ENCODE measurements at regions of chr14 and their contacts with region 1.

Region 1: GRCh38 chr14:91060351-91061055 is at the start of gene RPS6KA5:
- DNase-seq: peak; percentile 100
- ATAC-seq: peak; percentile 94 to 95
- H3K4me3 ChIP-seq: peak within 1 kb of the TSS; percentile 73 to 94 (median 87)
- H3K27ac ChIP-seq: peak within 1 kb of the TSS; percentile 96 to 98 (median 96)
- H3K4me1 ChIP-seq: peaks cover 24 to 28% of the 10 kb centered on the region in 2 donors
- H3K27me3 ChIP-seq: no peaks in the 10 kb centered on the region
- CTCF ChIP-seq: peak; percentile 27 to 79 (median 48)
- POLR2A ChIP-seq: peak; percentile 91 to 97
- total RNA-seq, gene RPS6KA5: 5.8 to 18.4 (median 9.8) TPM

Region 2: GRCh38 chr14:90383075-90383730 is 677.3 kb before region 1 on chr14:
- in situ Hi-C with region 1: loop called in 1 of 4 experiments (anchors 25 kb)
- intact Hi-C with region 1: loop called (anchors 5 kb)
- DNase-seq: peak; percentile 99 to 100
- ATAC-seq: peak; percentile 77 to 81
- H3K4me3 ChIP-seq: peak overlapping the region; percentile 69 to 80 (median 78)
- H3K27ac ChIP-seq: peak overlapping the region; percentile 97 to 99 (median 98)
- H3K4me1 ChIP-seq: peaks cover 29 to 40% of the 10 kb centered on the region in 2 donors
- H3K27me3 ChIP-seq: no peaks in the 10 kb centered on the region
- CTCF ChIP-seq: peak in 2 of 5 experiments; percentile 27 to 39
- POLR2A ChIP-seq: peak; percentile 94 to 98

Region 3: DNA sequence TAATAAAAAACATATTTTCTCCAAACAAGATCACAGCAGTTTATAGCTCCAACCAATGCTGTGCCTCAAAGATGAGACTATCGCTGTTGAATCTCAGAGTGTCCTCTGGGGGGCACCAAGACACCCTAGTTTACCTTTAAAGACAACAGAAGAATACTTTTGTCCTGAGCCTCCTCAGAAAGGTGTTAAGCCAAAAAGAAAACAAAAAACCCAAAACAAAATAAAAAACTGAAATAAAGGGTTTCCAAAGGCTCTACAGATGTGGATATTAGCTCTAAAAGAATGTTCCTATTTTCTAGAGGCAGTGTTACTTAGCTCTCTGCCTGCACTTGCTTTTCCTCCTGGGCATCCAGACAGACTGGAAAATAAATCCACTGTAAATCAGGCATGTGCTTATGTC is 157.4 kb before region 1 on chr14:
- in situ Hi-C with region 1: loop called in 1 of 4 experiments (anchors 5 kb)
- intact Hi-C with region 1: loop called (anchors 10 kb)
- DNase-seq: peak; percentile 23 to 25
- ATAC-seq: peak; percentile 70 to 86
- H3K4me3 ChIP-seq: no peak overlapping the region
- H3K27ac ChIP-seq: no peak overlapping the region
- H3K4me1 ChIP-seq: no peaks in the 10 kb centered on the region
- H3K27me3 ChIP-seq: no peaks in the 10 kb centered on the region
- CTCF ChIP-seq: peak; percentile 44 to 74 (median 62)
- POLR2A ChIP-seq: no peak

Region 4: DNA sequence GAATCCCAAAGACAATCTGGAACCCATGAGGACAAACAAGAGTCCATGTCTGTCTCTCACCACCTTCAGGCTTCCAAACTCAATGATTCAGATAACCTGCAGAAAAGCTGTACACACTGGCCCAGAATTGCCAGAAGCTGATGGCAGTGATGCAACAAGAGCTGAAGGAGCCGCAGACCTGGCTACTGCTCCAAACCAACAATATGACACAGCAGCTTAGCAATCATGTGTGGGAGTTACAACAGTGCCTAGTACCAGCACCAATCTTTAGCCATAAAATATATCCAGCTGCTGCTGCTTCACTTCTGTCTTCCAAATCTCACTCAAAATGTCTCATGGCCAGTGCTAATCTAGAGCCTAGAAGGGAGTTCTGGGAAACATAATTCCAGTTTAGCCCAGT is 22.1 kb before region 1 on chr14:
- in situ Hi-C with region 1: no loop called
- intact Hi-C with region 1: no loop called
- DNase-seq: peak in 1 of 2 donors; percentile 33
- ATAC-seq: peak; percentile 87 to 91
- H3K4me3 ChIP-seq: no peak overlapping the region
- H3K27ac ChIP-seq: peak overlapping the region in 2 of 4 donors; percentile 8 to 20
- H3K4me1 ChIP-seq: peaks cover 3 to 5% of the 10 kb centered on the region in 2 donors
- H3K27me3 ChIP-seq: no peaks in the 10 kb centered on the region
- CTCF ChIP-seq: no peak
- POLR2A ChIP-seq: no peak

Region 5: GRCh38 chr14:91114079-91115065 is 53.9 kb after region 1 on chr14:
- in situ Hi-C with region 1: no loop called
- intact Hi-C with region 1: loop called (anchors 2 kb)
- DNase-seq: peak; percentile 46 to 69
- ATAC-seq: peak; percentile 88 to 90
- H3K4me3 ChIP-seq: peak overlapping the region; percentile 72 to 92 (median 82)
- H3K27ac ChIP-seq: peak overlapping the region; percentile 97 to 100 (median 100)
- H3K4me1 ChIP-seq: peaks cover 42 to 45% of the 10 kb centered on the region in 2 donors
- H3K27me3 ChIP-seq: no peaks in the 10 kb centered on the region
- CTCF ChIP-seq: no peak
- POLR2A ChIP-seq: peak; percentile 90 to 91

Region 6: GRCh38 chr14:91138511-91139359 is 78.2 kb after region 1 on chr14:
- in situ Hi-C with region 1: no loop called
- intact Hi-C with region 1: loop called (anchors 1 kb)
- DNase-seq: peak in 1 of 2 donors; percentile 55
- ATAC-seq: peak; percentile 67 to 81
- H3K4me3 ChIP-seq: no peak overlapping the region
- H3K27ac ChIP-seq: peak overlapping the region; percentile 42 to 63 (median 50)
- H3K4me1 ChIP-seq: peaks cover 15 to 24% of the 10 kb centered on the region in 2 donors
- H3K27me3 ChIP-seq: no peaks in the 10 kb centered on the region
- CTCF ChIP-seq: peak; percentile 37 to 79 (median 65)
- POLR2A ChIP-seq: no peak

Region 7: DNA sequence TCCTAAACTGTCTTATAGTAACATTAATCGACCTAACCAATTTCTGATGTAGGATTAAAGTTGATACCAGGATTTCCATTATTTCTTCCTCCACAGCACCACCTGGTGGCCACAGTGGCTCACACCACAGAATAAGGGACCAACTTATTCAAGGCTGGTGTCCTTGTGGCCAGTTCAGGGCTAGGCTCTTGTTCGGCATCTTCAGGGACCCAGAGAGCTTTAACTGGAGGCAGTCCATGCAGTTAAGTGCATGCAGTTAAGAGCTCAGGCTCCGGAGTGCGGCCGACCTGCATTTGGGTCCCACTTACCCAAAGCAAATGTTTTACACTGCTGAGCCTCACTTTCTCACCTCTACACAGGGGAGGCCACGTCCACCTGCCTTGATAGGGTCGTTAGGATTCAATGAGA is 226.0 kb after region 1 on chr14:
- in situ Hi-C with region 1: loop called in 1 of 4 experiments (anchors 25 kb)
- intact Hi-C with region 1: no loop called
- DNase-seq: peak in 1 of 2 donors; percentile 53
- ATAC-seq: peak; percentile 62
- H3K4me3 ChIP-seq: no peak overlapping the region
- H3K27ac ChIP-seq: no peak overlapping the region
- H3K4me1 ChIP-seq: no peaks in the 10 kb centered on the region
- H3K27me3 ChIP-seq: no peaks in the 10 kb centered on the region
- CTCF ChIP-seq: peak; percentile 75 to 84 (median 80)
- POLR2A ChIP-seq: no peak

Measured in gastrocnemius medialis (tissue), 4 donors.